ENCODE measurements at regions of chr12 and their contacts with region 1.

Region 1: DNA sequence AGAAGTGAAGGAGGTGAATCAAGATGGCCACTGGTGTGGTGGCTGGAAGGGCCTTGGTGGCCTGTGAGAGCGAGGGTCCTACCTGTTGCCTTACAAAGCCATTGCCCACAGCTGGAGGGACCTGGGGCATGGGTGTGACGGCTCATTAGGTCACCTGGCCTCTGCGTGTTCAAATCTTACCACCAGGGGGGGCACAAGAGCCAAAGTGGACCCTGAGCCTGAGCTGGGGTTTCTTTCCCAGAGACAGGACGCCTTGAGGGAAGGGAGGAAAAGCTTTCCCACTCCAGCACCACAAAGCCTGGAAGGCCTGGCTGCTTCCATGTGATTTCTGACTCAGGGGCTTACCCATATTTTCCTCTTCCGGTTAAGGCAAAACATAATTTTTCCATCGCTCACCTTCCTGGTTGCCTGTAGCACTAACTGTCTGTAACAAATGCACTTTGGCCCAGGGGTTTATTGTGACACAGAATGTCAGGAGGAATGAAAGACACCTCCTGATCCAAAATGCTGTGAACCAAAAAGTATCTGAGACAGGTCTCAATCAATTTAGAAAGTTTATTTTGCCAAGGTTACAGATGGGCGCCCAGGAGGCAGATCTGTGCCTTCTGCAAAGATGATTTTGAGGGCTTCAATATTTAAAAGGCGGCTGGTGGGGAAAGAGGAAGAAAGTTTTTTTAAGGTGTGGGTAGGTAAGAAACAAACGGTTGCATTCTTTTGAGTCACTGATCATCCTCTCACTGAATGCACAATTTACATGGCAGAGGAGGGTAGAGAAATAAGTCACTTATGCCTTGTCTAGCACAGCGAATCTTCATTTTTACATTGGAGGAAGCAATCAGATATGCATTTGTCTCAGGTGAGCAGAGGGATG is 4.3 kb upstream of the CD9 start:
- DNase-seq: peak; percentile 96
- H3K4me3 ChIP-seq: no peak overlapping the region
- H3K27ac ChIP-seq: peak overlapping the region; percentile 56 to 59; a peak in 3 of 4 replicates
- H3K4me1 ChIP-seq: peaks cover 0 to 28% of the 10 kb centered on the region in 2 experiments; a peak in 1 of 4 replicates
- H3K27me3 ChIP-seq: no peaks in the 10 kb centered on the region
- CTCF ChIP-seq: peak; percentile 90
- EP300 ChIP-seq: no peak
- RAD21 ChIP-seq: peak; percentile 92

Region 2: GRCh38 chr12:5988659-5989116 is 207.2 kb before region 1 on chr12:
- CTCF ChIA-PET with region 1: interaction called, 23 read pairs
- POLR2A ChIA-PET with region 1: no interaction called
- DNase-seq: peak; percentile 85
- H3K4me3 ChIP-seq: peak overlapping the region in 1 of 2 experiments; percentile 52; a peak in 1 of 4 replicates
- H3K27ac ChIP-seq: no peak overlapping the region
- H3K4me1 ChIP-seq: peaks cover 0 to 3% of the 10 kb centered on the region in 2 experiments; a peak in 1 of 4 replicates
- H3K27me3 ChIP-seq: no peaks in the 10 kb centered on the region; the same call in 1 of the 2 replicates
- CTCF ChIP-seq: peak; percentile 97
- EP300 ChIP-seq: no peak
- RAD21 ChIP-seq: peak; percentile 94

Region 3: DNA sequence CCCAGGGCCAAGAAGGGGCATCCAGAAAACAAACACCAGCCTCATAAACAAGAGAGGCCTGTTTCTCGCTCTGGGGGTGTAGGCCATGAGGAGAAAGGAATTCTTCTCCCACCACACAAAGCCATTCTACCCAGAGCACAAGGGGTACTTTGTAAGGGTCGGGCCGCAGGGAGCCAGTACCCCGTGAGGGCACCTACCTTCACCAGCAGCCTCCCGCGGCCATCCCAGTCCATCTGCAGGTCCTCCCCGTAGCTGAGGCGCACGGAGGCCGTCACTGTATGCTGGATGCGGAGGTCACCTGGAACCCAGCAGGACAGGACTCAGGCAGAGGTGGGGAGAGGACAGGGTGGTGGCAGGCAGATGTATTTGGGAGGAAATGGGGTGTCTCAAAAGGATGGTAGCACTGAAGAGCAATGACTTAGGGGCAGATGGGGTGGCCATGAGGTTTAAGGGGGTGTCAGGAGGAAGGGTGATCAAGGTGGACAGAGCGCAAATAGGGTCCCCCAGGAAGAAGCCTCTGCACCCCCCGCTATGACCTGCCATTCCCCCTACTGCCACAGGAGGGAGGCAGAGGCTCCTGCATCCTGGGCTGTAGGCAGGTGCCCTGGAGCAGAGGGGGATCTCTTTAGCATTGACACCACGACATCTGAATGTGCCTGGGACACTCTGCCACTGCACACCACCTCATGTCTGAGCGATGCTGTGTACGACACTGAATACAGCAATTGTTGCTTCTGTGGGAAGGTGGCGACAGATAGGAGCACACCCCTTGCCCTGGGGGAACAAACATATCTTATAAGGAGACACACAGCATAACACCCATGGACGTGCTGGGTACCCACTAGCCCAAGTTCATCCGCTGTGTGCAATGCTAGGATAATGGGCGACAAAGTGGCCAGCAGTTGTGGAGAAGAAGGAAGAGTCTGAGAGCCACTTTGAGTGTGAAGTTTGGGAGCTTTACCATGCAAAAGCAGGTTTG is 132.9 kb before region 1 on chr12:
- CTCF ChIA-PET with region 1: interaction called, 98 read pairs
- POLR2A ChIA-PET with region 1: no interaction called
- DNase-seq: peak; percentile 91
- H3K4me3 ChIP-seq: peak overlapping the region in 1 of 2 experiments; percentile 26; a peak in 1 of 4 replicates
- H3K27ac ChIP-seq: peak overlapping the region in 1 of 2 experiments; percentile 69; a peak in 1 of 4 replicates
- H3K4me1 ChIP-seq: peaks cover 0 to 64% of the 10 kb centered on the region in 2 experiments; a peak in 1 of 4 replicates
- H3K27me3 ChIP-seq: no peaks in the 10 kb centered on the region
- CTCF ChIP-seq: peak; percentile 93
- EP300 ChIP-seq: no peak
- RAD21 ChIP-seq: peak; percentile 95

Region 4: DNA sequence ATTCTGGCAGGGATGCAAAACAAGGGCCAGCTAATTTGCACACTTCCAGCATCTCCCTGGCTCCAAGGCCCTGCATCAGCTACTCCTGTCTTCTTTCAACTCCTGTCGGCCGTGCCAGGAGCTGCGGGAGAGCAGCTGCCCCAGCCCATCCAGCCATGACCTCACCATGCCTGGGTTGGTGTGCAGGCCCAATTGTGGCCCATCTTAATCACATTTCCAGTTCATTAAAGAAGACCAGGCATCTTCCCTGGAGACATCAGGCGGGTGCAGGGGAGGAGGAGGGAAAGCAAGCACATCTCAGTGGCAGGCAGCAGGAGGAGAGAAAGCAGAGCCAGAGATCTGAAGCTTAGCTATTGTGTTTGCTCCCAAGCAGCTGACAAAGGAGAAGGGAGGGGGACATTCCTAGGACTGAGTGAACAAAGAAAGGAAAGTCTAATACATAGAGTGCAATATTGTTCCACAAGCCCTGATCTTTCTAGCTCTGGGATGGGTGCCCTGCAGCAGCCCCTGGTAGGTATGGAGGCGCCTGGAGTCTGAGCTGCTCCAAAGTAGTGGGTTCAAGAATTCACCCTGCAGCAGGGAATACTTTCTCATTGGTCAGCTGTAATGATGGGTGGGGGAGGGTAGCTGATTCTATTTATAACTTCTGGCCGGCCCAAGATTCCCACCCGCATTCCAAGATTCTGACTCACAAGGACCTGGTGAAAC is 111.5 kb before region 1 on chr12:
- CTCF ChIA-PET with region 1: interaction called, 15 read pairs
- POLR2A ChIA-PET with region 1: no interaction called
- DNase-seq: peak; percentile 85
- H3K4me3 ChIP-seq: no peak overlapping the region
- H3K27ac ChIP-seq: peak overlapping the region; percentile 50 to 98
- H3K4me1 ChIP-seq: peaks cover 27 to 56% of the 10 kb centered on the region in 2 experiments; a peak in 3 of 4 replicates
- H3K27me3 ChIP-seq: no peaks in the 10 kb centered on the region
- CTCF ChIP-seq: no peak
- EP300 ChIP-seq: peak in 1 of 2 experiments; percentile 95; a peak in 3 of 4 replicates
- RAD21 ChIP-seq: peak; percentile 34

Region 5: GRCh38 chr12:6211421-6211869 is 15.5 kb after region 1 on chr12:
- CTCF ChIA-PET with region 1: interaction called, 15 read pairs
- POLR2A ChIA-PET with region 1: no interaction called
- DNase-seq: no peak
- H3K4me3 ChIP-seq: no peak overlapping the region
- H3K27ac ChIP-seq: peak overlapping the region; percentile 29 to 34; a peak in 3 of 4 replicates
- H3K4me1 ChIP-seq: peaks cover 31 to 57% of the 10 kb centered on the region in 2 experiments; a peak in 3 of 4 replicates
- H3K27me3 ChIP-seq: no peaks in the 10 kb centered on the region
- CTCF ChIP-seq: no peak
- EP300 ChIP-seq: peak in 1 of 2 experiments; percentile 23; a peak in 1 of 4 replicates
- RAD21 ChIP-seq: no peak

Region 6: DNA sequence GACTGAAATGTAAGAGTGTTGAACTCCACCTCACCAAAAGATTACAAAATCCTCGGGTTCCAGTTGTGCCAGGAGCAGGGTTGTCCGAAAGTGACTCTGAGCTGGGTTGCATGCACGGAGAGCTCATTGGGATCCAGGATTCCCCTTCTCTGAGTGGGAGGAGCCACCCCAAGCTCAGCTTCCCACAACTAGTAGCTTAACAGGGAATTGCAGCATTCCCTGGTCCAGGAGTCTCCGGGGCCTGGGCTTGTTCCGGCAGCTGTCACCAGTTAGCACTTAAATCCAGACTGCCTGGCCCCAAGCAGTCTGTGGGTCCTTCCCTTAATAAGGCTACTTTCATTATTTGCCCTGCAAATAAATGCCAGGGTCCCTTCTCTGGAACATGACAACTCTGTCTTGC is 54.4 kb after region 1 on chr12:
- CTCF ChIA-PET with region 1: interaction called, 40 read pairs
- POLR2A ChIA-PET with region 1: no interaction called
- DNase-seq: peak; percentile 63
- H3K4me3 ChIP-seq: no peak overlapping the region
- H3K27ac ChIP-seq: peak overlapping the region in 1 of 2 experiments; percentile 92; a peak in 2 of 4 replicates
- H3K4me1 ChIP-seq: peaks cover 0 to 35% of the 10 kb centered on the region in 2 experiments; a peak in 2 of 4 replicates
- H3K27me3 ChIP-seq: no peaks in the 10 kb centered on the region
- CTCF ChIP-seq: no peak
- EP300 ChIP-seq: peak in 1 of 2 experiments; percentile 65; a peak in 1 of 4 replicates
- RAD21 ChIP-seq: 0 out of 2 replicates have a peak, but pooled peaks have one; percentile 14

Region 7: DNA sequence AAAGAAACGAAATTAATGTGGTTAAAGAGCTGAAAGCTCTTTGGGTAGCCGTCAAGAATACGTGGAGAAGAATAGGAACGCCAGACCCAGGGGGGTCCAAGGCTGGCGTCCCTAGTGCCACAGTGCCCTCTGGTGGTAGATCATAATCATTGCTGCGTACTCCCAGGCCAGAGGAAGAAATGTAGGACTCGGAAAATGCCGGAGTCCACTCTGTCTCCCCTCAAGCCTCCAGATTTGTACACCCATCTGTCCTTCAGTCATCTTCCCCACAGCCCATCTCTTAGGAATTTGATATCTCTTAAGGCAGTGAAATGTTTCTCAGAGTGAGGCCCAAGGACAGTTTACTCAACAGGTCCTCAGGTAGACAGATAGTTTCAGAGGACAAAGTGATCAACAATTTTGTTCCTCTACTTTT is 89.2 kb after region 1 on chr12:
- CTCF ChIA-PET with region 1: interaction called, 299 read pairs
- POLR2A ChIA-PET with region 1: interaction called, 4 read pairs
- DNase-seq: peak; percentile 91
- H3K4me3 ChIP-seq: no peak overlapping the region; a peak in 1 of 4 replicates
- H3K27ac ChIP-seq: peak overlapping the region in 1 of 2 experiments; percentile 87; a peak in 3 of 4 replicates
- H3K4me1 ChIP-seq: peaks cover 6 to 35% of the 10 kb centered on the region in 2 experiments
- H3K27me3 ChIP-seq: no peaks in the 10 kb centered on the region
- CTCF ChIP-seq: peak; percentile 91
- EP300 ChIP-seq: no peak
- RAD21 ChIP-seq: peak; percentile 99